GM12878 (cell line): ENCODE measurements at regions of chr15 and their contacts with region 1.

Region 1: DNA sequence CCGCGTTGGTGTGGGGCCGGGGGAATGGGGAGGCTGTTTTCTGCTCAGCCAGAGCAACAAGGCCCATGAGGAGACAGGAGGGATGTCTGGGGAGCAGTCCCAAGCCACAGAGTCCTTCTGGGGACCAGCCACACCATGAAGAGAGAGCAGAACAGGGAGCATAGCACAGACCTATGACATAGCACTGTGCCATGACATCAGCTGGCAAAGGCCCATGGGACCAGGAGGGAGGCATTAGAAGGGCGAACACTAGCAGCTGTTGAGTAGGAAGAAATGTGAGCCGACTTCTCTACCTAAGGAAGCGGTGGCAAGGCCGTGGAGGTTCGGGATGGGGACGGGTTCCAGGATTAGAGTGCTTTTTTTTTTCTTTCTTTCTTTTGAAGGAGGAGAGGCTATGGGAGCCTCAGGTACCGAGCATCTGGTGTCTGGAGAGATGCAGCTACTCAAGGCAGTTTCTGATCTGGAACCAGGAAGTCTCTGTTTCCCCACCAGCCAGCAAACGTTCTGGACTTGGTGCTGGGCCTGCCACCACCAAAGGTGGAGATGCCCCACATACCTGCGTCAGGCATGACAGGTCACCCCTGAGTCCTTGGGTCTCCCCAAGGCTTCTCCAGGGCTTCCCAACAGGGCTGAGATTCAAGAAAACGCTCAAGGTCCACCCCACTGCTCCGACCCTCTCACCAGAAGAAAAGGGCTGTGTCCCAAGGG is 77.3 kb upstream of the CGNL1 start:
- DNase-seq: no peak
- ATAC-seq: peak; percentile 5; the same call in 1 of the 3 replicates
- H3K4me3 ChIP-seq: peak overlapping the region; percentile 58; the same call in 1 of the 2 replicates
- H3K27ac ChIP-seq: peak overlapping the region; percentile 77
- H3K4me1 ChIP-seq: peaks cover 36% of the 10 kb centered on the region
- H3K27me3 ChIP-seq: no peaks in the 10 kb centered on the region
- CTCF ChIP-seq: no peak
- EP300 ChIP-seq: no peak
- POLR2A ChIP-seq: no peak
- RAD21 ChIP-seq: no peak

Region 2: GRCh38 chr15:57060799-57061198 is 238.2 kb before region 1 on chr15:
- CTCF ChIA-PET with region 1: no interaction called
- POLR2A ChIA-PET with region 1: no interaction called
- RAD21 ChIA-PET with region 1: no interaction called
- SMC1A ChIA-PET with region 1: no interaction called
- in situ Hi-C with region 1: no loop called
- intact Hi-C with region 1: no loop called
- DNase-seq: no peak
- ATAC-seq: no peak
- H3K4me3 ChIP-seq: no peak overlapping the region
- H3K27ac ChIP-seq: no peak overlapping the region
- H3K4me1 ChIP-seq: peaks cover 14% of the 10 kb centered on the region; the same call in 1 of the 2 replicates
- H3K27me3 ChIP-seq: no peaks in the 10 kb centered on the region
- CTCF ChIP-seq: no peak
- EP300 ChIP-seq: no peak
- POLR2A ChIP-seq: no peak
- RAD21 ChIP-seq: no peak

Region 3: GRCh38 chr15:57284535-57284934 is 14.5 kb before region 1 on chr15:
- CTCF ChIA-PET with region 1: interaction called, 13 read pairs
- POLR2A ChIA-PET with region 1: interaction called, 40 read pairs
- RAD21 ChIA-PET with region 1: interaction called, 13 read pairs
- SMC1A ChIA-PET with region 1: interaction called, 54 read pairs
- in situ Hi-C with region 1: no loop called
- intact Hi-C with region 1: loop called (anchors 2 kb)
- DNase-seq: no peak
- ATAC-seq: peak; percentile 75
- H3K4me3 ChIP-seq: peak overlapping the region; percentile 24; the same call in 1 of the 2 replicates
- H3K27ac ChIP-seq: peak overlapping the region; percentile 54
- H3K4me1 ChIP-seq: peaks cover 56% of the 10 kb centered on the region
- H3K27me3 ChIP-seq: no peaks in the 10 kb centered on the region
- CTCF ChIP-seq: no peak
- EP300 ChIP-seq: no peak
- POLR2A ChIP-seq: no peak
- RAD21 ChIP-seq: no peak

Region 4: DNA sequence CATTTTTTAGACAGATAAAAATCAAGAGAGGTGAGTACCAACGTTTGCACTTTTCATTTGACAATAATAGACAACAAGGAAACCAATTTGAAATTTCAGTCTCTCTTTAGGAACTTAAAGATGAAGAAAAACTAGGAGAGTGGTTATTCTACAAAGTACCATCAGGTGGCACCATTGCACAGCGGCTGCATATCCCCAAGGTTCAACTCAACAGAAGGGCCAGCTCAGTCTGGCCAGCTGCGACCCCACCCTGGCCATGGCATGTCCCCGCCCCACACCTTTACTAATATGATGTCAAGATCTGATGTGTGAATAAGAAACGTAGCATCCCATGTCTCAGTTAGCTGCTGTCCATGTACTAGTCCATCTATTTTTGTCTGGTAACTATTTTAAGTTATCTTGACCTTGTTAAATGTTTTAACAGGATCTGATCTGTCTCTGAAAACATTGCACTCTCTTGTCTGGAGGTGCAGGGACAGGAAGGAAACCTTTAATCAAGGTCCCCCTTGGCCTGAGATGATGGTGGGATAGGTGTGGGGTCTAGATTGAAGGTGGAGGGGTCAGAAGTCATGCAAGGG is 41.8 kb after region 1 on chr15:
- CTCF ChIA-PET with region 1: no interaction called
- POLR2A ChIA-PET with region 1: no interaction called
- RAD21 ChIA-PET with region 1: no interaction called
- SMC1A ChIA-PET with region 1: no interaction called
- in situ Hi-C with region 1: no loop called
- intact Hi-C with region 1: no loop called
- DNase-seq: peak; percentile 15
- ATAC-seq: peak; percentile 84
- H3K4me3 ChIP-seq: no peak overlapping the region
- H3K27ac ChIP-seq: no peak overlapping the region
- H3K4me1 ChIP-seq: no peaks in the 10 kb centered on the region
- H3K27me3 ChIP-seq: peaks cover 0 to 2% of the 10 kb centered on the region in 2 experiments; a peak in 2 of 4 replicates
- CTCF ChIP-seq: peak; percentile 71 to 88 (median 75)
- EP300 ChIP-seq: no peak
- POLR2A ChIP-seq: no peak
- RAD21 ChIP-seq: peak; percentile 91

Region 5: GRCh38 chr15:57418661-57419060 is 119.7 kb after region 1 on chr15:
- CTCF ChIA-PET with region 1: no interaction called
- POLR2A ChIA-PET with region 1: no interaction called
- RAD21 ChIA-PET with region 1: no interaction called
- SMC1A ChIA-PET with region 1: no interaction called
- in situ Hi-C with region 1: no loop called
- intact Hi-C with region 1: no loop called
- DNase-seq: no peak
- ATAC-seq: no peak
- H3K4me3 ChIP-seq: no peak overlapping the region
- H3K27ac ChIP-seq: no peak overlapping the region
- H3K4me1 ChIP-seq: no peaks in the 10 kb centered on the region
- H3K27me3 ChIP-seq: no peaks in the 10 kb centered on the region
- CTCF ChIP-seq: no peak
- EP300 ChIP-seq: no peak
- POLR2A ChIP-seq: no peak
- RAD21 ChIP-seq: no peak

Region 6: GRCh38 chr15:57680021-57680420 is 381.0 kb after region 1 on chr15:
- CTCF ChIA-PET with region 1: no interaction called
- POLR2A ChIA-PET with region 1: no interaction called
- RAD21 ChIA-PET with region 1: no interaction called
- SMC1A ChIA-PET with region 1: no interaction called
- in situ Hi-C with region 1: no loop called
- intact Hi-C with region 1: no loop called
- DNase-seq: no peak
- ATAC-seq: no peak
- H3K4me3 ChIP-seq: no peak overlapping the region
- H3K27ac ChIP-seq: no peak overlapping the region
- H3K4me1 ChIP-seq: no peaks in the 10 kb centered on the region
- H3K27me3 ChIP-seq: no peaks in the 10 kb centered on the region; a peak in 2 of 4 replicates
- CTCF ChIP-seq: no peak
- EP300 ChIP-seq: no peak
- POLR2A ChIP-seq: no peak
- RAD21 ChIP-seq: no peak